Ovary (tissue), 10 donors: ENCODE measurements at regions of chr1 and their contacts with region 1.

Region 1: DNA sequence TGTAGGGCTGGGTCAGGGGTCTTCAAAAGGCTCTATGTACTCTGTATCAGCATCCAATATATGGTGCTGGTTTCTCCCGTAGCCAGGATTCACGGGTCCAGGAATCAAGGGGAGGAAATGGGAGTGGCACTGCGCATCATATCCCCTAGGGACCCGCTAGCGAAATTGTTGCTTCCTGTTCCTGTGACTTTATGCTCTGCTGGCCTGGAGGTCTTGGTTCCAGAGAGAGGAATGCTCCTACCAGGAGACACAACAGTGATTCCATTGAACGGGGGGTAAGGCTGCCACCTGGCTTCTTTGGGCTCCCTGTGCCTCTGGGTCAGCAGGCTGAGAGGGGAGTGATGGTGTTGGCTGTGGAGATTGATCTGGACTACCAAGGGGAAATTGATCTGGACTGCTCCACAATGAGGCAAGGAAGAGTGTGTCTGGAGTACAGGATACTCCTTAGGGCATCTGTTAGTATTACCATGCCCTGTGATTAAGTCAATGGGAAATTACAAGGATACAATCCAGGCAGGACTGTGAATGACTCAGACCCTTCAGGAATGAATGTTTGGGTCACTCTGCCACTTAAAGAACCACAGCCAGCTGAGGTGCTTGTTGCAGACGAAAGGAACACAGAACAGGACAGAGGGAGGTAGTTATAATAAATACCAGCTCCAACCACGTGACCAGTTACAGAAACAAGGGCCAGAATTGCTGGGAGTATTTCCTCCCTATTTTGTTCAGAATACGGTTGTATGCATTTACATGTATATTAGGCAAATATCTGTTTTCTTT is 10.2 kb downstream of the SPSB1 start:
- DNase-seq: peak in 1 of 5 donors; percentile 22
- H3K4me3 ChIP-seq: no peak overlapping the region
- H3K27ac ChIP-seq: no peak overlapping the region
- H3K4me1 ChIP-seq: peaks cover 19% of the 10 kb centered on the region
- H3K27me3 ChIP-seq: no peaks in the 10 kb centered on the region
- CTCF ChIP-seq: no peak
- EP300 ChIP-seq: no peak
- POLR2A ChIP-seq: no peak

Region 2: GRCh38 chr1:9234223-9235095 is 68.5 kb before region 1 on chr1 and contains the start of gene H6PD:
- intact Hi-C with region 1: no loop called
- DNase-seq: peak; percentile 81 to 90 (median 89)
- H3K4me3 ChIP-seq: peak within 1 kb of the TSS; percentile 73
- H3K27ac ChIP-seq: peak within 1 kb of the TSS; percentile 95 to 96
- H3K4me1 ChIP-seq: peaks cover 24% of the 10 kb centered on the region
- H3K27me3 ChIP-seq: no peaks in the 10 kb centered on the region
- CTCF ChIP-seq: peak; percentile 53 to 95 (median 90)
- EP300 ChIP-seq: no peak
- POLR2A ChIP-seq: peak; percentile 84
- total RNA-seq, gene H6PD: 63.8 to 148 (median 91.3) TPM

Region 3: DNA sequence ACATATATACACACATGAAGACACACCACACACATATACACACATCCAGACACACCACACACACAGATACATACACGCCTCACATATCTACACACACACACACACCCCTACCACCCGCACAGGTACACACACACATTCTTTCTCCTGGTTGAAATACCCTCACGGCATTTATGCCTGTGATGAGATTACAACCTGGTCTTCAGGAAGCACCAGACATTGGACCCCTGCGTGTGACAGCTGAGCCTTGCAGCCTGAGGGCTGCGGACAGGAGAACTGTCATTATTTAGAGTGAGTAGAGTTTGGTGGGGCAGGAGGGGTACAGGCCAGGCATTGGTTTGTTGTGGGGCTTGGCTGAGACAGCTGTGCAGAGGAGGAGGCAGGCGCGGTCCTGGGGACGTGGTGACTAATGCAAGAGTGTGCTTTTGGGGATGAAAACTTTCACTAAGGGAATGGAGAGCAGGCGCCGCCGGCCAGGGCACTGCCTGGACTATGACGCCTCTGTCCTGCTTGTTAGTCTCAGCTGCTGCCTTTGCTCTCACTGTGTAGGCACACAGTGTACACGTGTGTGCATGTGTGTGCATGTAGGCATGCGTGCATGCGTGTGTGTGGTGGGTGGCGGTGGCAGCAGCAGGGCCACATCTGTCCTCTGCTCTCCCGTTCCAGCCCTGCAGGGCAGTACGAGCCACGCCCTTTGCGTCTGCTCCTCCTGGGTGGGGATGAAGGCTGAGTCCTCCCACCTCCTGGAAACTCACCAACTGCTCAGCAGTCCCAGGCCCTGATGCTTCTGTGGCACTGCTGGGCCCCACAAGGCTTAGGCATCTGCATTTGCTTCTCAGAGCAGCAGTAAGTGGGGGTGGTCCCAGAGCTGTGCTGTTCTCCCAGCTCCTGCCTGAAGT is 47.3 kb after region 1 on chr1:
- intact Hi-C with region 1: loop called in 1 of 4 experiments (anchors 10 kb)
- DNase-seq: no peak
- H3K4me3 ChIP-seq: no peak overlapping the region
- H3K27ac ChIP-seq: no peak overlapping the region
- H3K4me1 ChIP-seq: peaks cover 20% of the 10 kb centered on the region
- H3K27me3 ChIP-seq: no peaks in the 10 kb centered on the region
- CTCF ChIP-seq: no peak
- EP300 ChIP-seq: no peak
- POLR2A ChIP-seq: no peak